Sciatic nerve (tissue), 2 donors: ENCODE measurements at regions of chr11 and their contacts with region 1.

Region 1: DNA sequence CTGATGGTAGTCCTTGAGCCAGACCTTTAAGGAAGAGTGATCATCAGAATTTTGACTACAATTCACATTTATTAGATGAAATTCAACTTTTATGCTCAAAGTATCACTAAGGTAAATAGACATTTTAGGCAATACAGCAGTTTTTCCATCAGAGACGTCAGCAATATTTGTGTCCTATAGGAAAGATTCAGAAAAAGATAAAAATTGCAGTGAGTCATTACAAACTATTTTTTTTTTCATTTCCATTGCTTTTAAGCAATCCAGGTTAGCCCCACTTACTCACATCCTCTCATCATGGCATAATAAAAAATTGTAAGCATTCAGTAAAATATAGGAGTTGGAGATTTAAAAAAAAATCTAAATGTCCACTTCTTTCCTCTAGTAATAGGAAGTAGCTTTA is 46.9 kb downstream of the MSANTD4 start:
- DNase-seq: no peak
- ATAC-seq: no peak

Region 2: GRCh38 chr11:104764710-104765045 is 1210.5 kb before region 1 on chr11:
- intact Hi-C with region 1: loop called (anchors 5 kb)
- DNase-seq: no peak
- ATAC-seq: no peak

Region 3: GRCh38 chr11:105469931-105470330 is 505.2 kb before region 1 on chr11:
- intact Hi-C with region 1: no loop called
- DNase-seq: no peak
- ATAC-seq: no peak

Region 4: DNA sequence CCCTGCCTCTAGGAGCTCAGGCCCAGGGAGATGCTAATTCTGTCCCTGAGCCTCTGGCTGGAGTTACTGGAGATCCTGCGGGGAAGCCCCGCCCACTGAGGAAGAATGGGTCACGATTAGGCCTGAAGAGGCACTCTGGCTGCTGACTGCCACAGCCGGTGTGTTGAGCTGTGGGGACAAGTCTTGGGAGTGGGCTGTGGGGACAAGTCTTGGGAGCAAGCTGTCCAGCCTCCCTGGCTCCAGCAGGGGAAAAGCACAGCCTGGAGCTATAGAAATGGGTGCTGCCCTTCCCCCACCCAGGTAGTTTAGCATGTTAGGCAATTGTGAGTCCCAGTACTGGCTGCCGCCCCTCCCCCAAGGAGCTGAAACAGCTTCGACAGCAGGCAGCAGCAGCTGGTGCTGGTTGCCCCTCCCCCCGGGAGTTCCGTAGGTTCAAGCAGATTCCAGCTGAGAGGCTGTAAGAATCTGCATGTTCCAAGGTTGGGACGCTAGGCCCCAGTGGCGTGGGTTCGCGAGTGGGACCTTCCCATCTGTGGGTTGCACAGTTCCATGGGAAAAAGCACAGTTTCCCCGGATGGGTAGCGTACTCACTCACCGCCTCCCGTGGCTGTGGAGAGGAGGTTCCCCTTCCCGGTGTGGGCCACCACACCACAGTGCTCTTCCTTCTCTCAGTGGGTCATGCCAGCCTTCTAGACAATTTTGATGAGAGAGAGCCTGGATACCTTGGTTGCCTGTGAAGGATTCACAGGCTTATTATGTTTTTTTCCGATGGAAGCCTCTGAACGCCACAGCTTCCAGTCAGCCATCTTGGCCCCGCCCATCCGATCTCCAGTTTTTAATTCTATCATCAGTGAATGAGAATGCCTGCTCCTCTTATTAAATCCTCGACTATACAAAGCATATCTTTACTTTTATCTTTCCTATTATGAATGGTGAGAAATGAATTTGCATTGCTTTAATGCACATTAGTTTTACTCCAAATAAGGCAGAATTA is 14.6 kb before region 1 on chr11:
- intact Hi-C with region 1: no loop called
- DNase-seq: no peak
- ATAC-seq: peak; percentile 34